Upper lobe of right lung (tissue), 1 donor: ENCODE measurements at regions of chrX and their contacts with region 1.

Region 1: GRCh38 chrX:48021026-48021900 is 14.5 kb downstream of the SPACA5 start:
- DNase-seq: peak; percentile 85
- ATAC-seq: peak; percentile 89
- H3K4me3 ChIP-seq: peak overlapping the region; percentile 56
- H3K27ac ChIP-seq: peak overlapping the region; percentile 97
- H3K4me1 ChIP-seq: no peaks in the 10 kb centered on the region
- H3K27me3 ChIP-seq: no peaks in the 10 kb centered on the region
- CTCF ChIP-seq: no peak

Region 2: DNA sequence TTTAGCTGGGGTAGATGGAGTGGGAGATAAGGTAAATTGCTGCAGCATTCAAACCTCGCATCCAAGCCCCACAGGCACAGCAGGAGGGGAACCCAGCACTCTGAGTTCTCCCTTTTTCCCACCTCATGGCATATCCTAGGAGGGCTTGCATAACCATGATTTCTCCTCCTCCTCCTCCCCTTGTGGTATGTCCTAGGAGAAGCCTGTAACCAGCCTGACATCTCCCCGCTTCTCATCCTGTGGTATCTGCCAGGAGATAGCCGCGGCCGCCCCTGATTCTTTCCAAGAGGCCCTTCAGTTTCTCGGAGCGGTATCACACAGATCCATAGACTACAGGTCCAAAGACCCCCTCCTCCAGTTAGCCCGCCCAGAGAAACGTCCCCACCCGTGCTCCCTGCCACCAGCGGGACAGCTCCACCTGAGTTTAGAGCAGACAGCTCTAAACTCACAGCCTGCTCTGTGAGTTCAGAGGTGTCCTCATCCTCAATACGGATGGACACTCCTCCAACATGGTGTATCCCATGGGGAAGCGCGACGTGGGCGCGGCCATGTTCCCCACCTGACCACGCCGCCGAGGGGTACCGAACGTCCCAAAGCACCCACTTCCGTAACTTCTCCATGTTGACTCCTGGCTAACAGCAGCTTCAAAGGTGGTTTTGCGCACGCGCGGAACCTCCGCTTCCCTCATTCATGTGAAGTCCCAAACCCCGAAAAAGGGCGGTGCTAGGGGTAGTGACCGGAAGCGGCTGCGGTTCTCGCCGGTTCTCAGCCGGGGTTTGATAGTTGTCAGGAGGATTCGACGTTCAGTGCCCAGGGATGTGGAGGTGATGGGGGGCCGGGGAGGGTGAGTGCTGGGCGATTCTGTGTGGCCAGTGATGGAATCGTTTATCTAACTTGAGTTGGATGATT is 184.8 kb before region 1 on chrX and contains the start of gene ZNF81:
- intact Hi-C with region 1: loop called (anchors 10 kb)
- DNase-seq: peak; percentile 97
- ATAC-seq: peak; percentile 100
- H3K4me3 ChIP-seq: peak within 1 kb of the TSS; percentile 60
- H3K27ac ChIP-seq: peak within 1 kb of the TSS; percentile 60
- H3K4me1 ChIP-seq: no peaks in the 10 kb centered on the region
- H3K27me3 ChIP-seq: no peaks in the 10 kb centered on the region
- CTCF ChIP-seq: no peak
- total RNA-seq, gene ZNF81: 10.0 TPM